ENCODE measurements at regions of chr3 and their contacts with region 1.

Region 1: DNA sequence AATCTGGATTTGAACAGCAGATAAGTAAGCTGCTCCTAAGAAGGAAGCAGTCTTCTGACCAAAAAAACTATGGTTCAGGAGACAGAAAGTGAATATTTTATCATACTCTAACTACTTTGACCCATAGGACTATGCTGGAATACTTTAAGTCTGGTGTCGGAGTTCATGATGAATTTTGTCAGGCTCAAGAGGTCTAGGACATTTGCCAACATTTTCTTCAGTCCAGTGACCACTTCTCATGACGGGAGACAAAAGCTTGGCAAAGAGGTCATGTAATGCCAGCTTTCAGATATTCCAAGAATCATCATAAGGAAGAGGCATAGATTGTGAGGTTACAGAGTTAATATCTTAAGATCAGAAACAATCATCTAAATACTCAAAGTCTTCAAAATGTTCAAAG is 20.5 kb upstream of the DCBLD2 start:
- DNase-seq: no peak
- H3K4me3 Mint-ChIP-seq: no peak overlapping the region
- H3K27ac Mint-ChIP-seq: no peak overlapping the region
- H3K4me1 Mint-ChIP-seq: peaks cover 18% of the 10 kb centered on the region
- H3K27me3 Mint-ChIP-seq: no peaks in the 10 kb centered on the region
- CTCF ChIP-seq: no peak

Region 2: DNA sequence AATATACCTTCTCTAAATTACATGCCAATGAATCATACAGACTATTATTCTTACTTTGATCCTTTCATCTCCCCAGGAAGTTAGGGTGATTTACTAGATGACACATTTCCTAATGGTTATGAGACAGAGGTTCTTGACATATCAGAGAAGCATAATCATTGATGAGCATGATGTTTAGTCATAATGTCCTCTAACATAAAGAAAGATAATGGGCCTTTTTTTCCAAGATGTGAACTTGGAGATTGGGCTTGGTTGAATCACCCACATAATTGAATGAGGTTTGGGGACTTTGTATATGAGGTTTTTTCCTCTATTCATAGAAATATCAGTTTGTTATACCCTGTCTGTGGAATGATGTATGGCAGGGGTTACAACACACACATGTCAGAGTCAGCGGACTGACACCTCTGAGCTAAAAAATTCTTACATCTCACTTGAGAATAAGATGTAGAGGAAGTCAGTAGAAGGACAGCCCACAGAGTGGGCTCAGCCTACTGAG is 49.3 kb after region 1 on chr3:
- CTCF ChIA-PET with region 1: no interaction called
- POLR2A ChIA-PET with region 1: interaction called, 3 read pairs
- intact Hi-C with region 1: loop called (anchors 2 kb)
- DNase-seq: peak; percentile 85
- H3K4me3 Mint-ChIP-seq: no peak overlapping the region
- H3K27ac Mint-ChIP-seq: peak overlapping the region; percentile 92
- H3K4me1 Mint-ChIP-seq: peaks cover 30% of the 10 kb centered on the region
- H3K27me3 Mint-ChIP-seq: no peaks in the 10 kb centered on the region
- CTCF ChIP-seq: no peak

Measured in MCF 10A (cell line).